WTC11 (cell line): ENCODE measurements at regions of chr15 and their contacts with region 1.

Region 1: DNA sequence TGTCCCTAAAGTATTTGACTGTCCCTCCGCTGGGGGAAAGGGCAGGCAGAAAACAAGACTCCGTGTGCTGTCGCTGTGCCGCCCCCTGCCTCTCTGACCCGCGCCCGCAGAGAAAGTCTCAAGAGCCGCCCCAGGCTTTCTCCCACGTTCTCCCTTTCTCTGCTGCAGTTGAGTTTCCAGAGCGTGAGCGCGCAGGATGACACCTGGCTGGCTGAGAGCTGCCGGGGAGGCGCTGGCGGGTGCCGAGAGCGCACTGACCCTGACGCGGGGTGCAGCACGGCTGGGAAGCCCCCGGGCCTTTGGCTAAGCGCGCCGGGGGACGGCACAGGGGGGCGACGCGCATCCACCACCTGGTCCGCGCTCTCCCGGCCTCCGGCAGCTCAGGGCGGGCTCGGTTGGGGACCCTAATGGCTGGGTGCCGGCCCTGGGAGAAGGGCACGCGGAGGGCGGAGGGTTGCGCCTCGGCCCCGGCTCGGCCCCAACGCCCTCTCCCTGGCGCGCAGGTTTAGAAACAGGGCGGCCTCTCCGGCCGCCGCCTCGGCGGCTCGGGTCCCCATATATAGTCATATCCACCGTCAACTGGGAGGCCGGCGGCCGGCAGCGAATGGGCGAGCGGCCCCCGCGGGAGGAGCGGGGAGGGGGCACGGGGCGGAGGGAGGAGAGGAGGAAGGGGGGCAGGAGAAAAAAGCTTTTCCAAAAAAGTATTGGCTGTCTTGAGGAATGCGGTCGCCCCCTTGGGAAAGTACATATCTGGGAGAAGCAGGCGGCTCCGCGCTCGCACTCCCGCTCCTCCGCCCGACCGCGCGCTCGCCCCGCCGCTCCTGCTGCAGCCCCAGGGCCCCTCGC is at the start of gene TPM1:
- DNase-seq: peak; percentile 91
- ATAC-seq: peak; percentile 75
- H3K4me3 Mint-ChIP-seq: peak within 1 kb of the TSS; percentile 97
- H3K27ac Mint-ChIP-seq: peak within 1 kb of the TSS; percentile 84
- H3K4me1 Mint-ChIP-seq: peaks cover 61% of the 10 kb centered on the region
- H3K27me3 Mint-ChIP-seq: peaks cover 7% of the 10 kb centered on the region
- CTCF ChIP-seq: no peak
- total RNA-seq, gene TPM1: 370 to 421 TPM (median 382 TPM) in 3 replicates

Region 2: GRCh38 chr15:62853114-62853832 is 188.9 kb before region 1 on chr15:
- CTCF ChIA-PET with region 1: interaction called, 131 read pairs
- POLR2A ChIA-PET with region 1: interaction called, 12 read pairs
- DNase-seq: no peak
- ATAC-seq: no peak
- H3K4me3 Mint-ChIP-seq: no peak overlapping the region
- H3K27ac Mint-ChIP-seq: peak overlapping the region; percentile 80
- H3K4me1 Mint-ChIP-seq: peaks cover 53% of the 10 kb centered on the region
- H3K27me3 Mint-ChIP-seq: no peaks in the 10 kb centered on the region; the same call in 1 of the 2 replicates
- CTCF ChIP-seq: no peak